Gastrocnemius medialis (tissue), 4 donors: ENCODE measurements at regions of chr9 and their contacts with region 1.

Region 1: DNA sequence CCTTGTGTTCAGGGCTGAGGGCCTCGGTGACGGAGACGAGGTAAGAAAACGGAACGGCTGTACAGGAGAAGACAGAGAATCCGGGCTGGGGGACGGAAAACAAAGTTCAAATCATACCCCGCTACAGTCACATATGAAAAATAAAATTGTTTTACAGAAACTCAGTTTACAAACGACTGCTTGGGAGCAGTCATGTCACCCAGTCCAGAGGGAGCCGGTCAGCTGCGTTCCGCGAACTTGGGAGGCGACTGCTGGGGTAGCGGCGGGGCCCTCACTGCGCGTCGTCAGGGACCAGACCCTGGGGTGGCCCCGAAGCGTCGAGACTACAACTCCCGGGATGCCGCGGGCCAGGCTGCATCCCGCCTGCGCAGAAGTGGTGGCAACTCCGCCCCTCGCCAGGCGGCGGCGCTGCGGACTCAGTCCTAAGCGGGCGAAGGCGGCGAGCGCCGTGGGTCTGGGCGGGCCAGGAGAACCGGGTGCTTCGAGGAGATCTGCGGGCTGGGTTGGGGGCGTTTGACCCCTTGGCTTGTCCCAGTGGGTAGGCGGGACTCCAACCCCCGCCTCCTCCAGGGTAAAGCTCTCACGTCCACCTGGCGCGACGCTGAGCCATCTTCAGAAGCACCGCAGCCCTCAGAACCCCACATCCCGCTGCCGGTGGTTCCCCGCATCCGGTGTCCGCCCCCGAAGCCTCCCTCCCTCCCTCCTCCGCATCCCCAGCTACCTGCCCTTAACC is 4.0 kb downstream of the SIT1 start:
- DNase-seq: peak; percentile 84 to 88
- ATAC-seq: peak; percentile 90 to 94
- H3K4me3 ChIP-seq: peak overlapping the region; percentile 66 to 75 (median 70)
- H3K27ac ChIP-seq: peak overlapping the region; percentile 83 to 91 (median 88)
- H3K4me1 ChIP-seq: peaks cover 11% of the 10 kb centered on the region in 2 donors
- H3K27me3 ChIP-seq: no peaks in the 10 kb centered on the region
- CTCF ChIP-seq: peak; percentile 96 to 99 (median 98)
- POLR2A ChIP-seq: peak; percentile 74 to 81

Region 2: DNA sequence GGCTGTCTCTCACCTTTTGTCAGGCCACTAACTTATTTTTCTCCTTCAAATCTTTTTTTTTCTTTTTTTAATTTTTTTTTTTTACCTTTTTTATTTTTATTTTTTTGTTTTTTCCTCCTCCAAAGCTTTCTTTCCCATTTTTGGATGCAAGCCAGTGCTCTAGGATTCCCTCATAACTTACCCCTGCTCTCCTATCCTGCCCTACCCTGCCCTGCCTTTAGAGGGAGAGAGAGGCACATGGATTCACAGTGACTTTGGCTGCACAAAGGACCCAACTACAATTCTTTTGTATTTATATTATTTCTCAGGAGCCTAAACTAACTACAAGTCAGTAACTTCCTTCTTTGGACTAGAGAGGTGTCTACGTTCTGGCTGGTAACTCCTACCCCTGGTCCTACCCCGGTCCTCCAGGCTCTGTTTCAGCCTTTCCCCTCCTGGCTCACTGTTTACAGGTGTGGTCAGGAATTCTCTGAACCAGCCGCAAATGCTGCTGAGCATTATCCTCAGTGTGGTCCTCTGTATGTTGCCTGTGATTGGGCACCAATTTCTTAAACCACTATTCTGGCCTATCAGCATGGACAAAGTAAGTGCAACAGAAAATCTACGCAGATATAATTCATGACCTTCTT is 165.2 kb before region 1 on chr9:
- in situ Hi-C with region 1: no loop called
- intact Hi-C with region 1: loop called (anchors 5 kb)
- DNase-seq: peak; percentile 27 to 71
- ATAC-seq: peak; percentile 68 to 78
- H3K4me3 ChIP-seq: no peak overlapping the region
- H3K27ac ChIP-seq: no peak overlapping the region
- H3K4me1 ChIP-seq: no peaks in the 10 kb centered on the region
- H3K27me3 ChIP-seq: no peaks in the 10 kb centered on the region
- CTCF ChIP-seq: peak; percentile 74 to 89 (median 78)
- POLR2A ChIP-seq: no peak

Region 3: GRCh38 chr9:35657546-35658136 is 10.9 kb after region 1 on chr9 and contains the start of gene RMRP:
- in situ Hi-C with region 1: no loop called
- intact Hi-C with region 1: loop called (anchors 1 kb)
- DNase-seq: peak; percentile 97 to 98
- ATAC-seq: peak; percentile 91 to 96
- H3K4me3 ChIP-seq: peak within 1 kb of the TSS; percentile 79 to 85 (median 82)
- H3K27ac ChIP-seq: peak within 1 kb of the TSS; percentile 92 to 97 (median 96)
- H3K4me1 ChIP-seq: peaks cover 28 to 29% of the 10 kb centered on the region in 2 donors
- H3K27me3 ChIP-seq: no peaks in the 10 kb centered on the region
- CTCF ChIP-seq: peak; percentile 44 to 56 (median 52)
- POLR2A ChIP-seq: peak; percentile 56 to 61
- total RNA-seq, gene RMRP: 115 to 715 (median 367) TPM

Region 4: GRCh38 chr9:35690431-35691333 is 44.0 kb after region 1 on chr9:
- in situ Hi-C with region 1: loop called in 1 of 4 experiments (anchors 10 kb)
- intact Hi-C with region 1: loop called (anchors 1 kb)
- DNase-seq: peak; percentile 56 to 75
- ATAC-seq: peak; percentile 21 to 32
- H3K4me3 ChIP-seq: peak overlapping the region; percentile 77 to 96 (median 87)
- H3K27ac ChIP-seq: peak overlapping the region; percentile 97 to 99 (median 98)
- H3K4me1 ChIP-seq: peaks cover 35 to 37% of the 10 kb centered on the region in 2 donors
- H3K27me3 ChIP-seq: no peaks in the 10 kb centered on the region
- CTCF ChIP-seq: no peak
- POLR2A ChIP-seq: peak; percentile 21 to 25

Region 5: DNA sequence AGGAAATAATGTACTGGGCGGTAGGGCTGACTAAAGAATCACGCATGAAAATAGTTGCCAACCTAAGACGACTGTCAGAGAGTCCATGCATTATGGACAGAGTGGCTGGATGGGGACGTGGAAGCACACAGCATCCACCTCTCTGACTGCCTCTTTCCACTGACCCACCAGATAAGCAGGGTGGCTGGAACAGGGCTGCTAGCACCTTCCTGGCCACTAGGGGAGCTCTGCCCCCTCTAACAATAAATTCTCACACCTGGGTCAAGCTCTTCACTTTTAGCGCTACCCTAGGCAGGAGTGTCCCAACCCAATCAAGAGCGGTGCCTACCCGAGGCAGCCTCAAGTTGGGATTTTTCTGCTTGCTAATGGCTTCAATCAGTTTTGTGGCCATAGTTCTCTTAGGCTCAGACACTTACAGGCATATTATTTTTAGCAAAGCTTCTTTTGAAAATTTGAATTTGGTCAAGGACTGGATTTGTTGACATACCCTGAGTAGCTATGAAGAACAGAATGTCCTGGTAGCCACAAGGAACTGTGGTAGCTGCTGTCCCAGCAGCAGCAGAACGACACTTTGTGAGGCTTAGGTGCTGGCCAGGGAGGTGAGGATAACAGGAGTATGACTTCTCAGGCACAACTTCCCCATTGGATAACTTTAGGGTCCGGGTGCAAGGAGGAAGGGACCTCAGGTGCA is 50.0 kb after region 1 on chr9:
- in situ Hi-C with region 1: loop called in 1 of 4 experiments (anchors 10 kb)
- intact Hi-C with region 1: loop called (anchors 1 kb)
- DNase-seq: peak in 1 of 2 donors; percentile 62
- ATAC-seq: peak; percentile 77 to 86
- H3K4me3 ChIP-seq: no peak overlapping the region
- H3K27ac ChIP-seq: peak overlapping the region; percentile 37 to 66 (median 58)
- H3K4me1 ChIP-seq: peaks cover 7 to 8% of the 10 kb centered on the region in 2 donors
- H3K27me3 ChIP-seq: no peaks in the 10 kb centered on the region
- CTCF ChIP-seq: peak; percentile 79 to 95 (median 82)
- POLR2A ChIP-seq: no peak

Region 6: DNA sequence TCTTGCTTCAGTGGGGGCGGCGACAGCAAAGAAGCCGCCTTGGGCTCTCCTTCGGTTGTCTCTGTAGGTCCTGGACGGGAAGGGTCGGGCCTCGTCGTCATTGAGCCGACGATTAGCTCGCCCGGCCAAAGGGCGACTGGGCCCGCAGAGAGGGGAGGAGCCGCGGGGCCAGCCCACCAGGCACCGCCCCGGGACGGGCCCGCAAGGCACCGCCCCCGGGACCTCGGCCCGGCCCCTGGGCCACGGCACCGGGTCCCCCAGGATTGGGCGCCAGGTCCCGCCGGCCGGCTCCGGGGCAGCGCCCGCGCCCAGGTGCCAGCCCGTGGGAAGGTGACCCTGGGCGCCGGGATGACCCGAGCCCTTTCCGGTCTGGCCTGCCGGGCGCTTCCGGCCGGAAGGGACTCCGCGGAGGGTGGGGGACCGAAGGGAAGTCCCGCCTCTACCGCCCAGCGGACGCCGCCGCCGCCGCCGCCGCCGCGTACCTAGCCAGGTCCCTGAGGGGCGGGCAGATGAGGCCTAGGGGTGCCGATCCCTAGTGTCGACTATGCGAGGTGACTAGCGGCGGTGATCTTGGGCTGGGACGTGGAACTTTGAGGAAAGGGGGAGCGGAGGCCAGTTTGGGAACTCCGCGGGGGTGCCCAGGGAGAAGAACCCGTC is 102.3 kb after region 1 on chr9 and contains the starts of genes GBA2 and RGP1:
- in situ Hi-C with region 1: no loop called
- intact Hi-C with region 1: loop called (anchors 1 kb)
- DNase-seq: peak; percentile 71 to 87
- ATAC-seq: peak; percentile 81 to 85
- H3K4me3 ChIP-seq: peak within 1 kb of the TSS; percentile 81 to 99 (median 85)
- H3K27ac ChIP-seq: peak within 1 kb of the TSS; percentile 88 to 97 (median 94)
- H3K4me1 ChIP-seq: peaks cover 41 to 45% of the 10 kb centered on the region in 2 donors
- H3K27me3 ChIP-seq: no peaks in the 10 kb centered on the region
- CTCF ChIP-seq: no peak
- POLR2A ChIP-seq: peak; percentile 88 to 95
- total RNA-seq, gene GBA2: 47.3 to 63.2 (median 51.4) TPM
- total RNA-seq, gene RGP1: 22.0 to 41.1 (median 36.3) TPM

Region 7: GRCh38 chr9:35882263-35882848 is 235.7 kb after region 1 on chr9:
- in situ Hi-C with region 1: no loop called
- intact Hi-C with region 1: loop called (anchors 1 kb)
- DNase-seq: peak; percentile 57 to 77
- ATAC-seq: peak; percentile 90 to 92
- H3K4me3 ChIP-seq: no peak overlapping the region
- H3K27ac ChIP-seq: no peak overlapping the region
- H3K4me1 ChIP-seq: no peaks in the 10 kb centered on the region
- H3K27me3 ChIP-seq: no peaks in the 10 kb centered on the region
- CTCF ChIP-seq: peak; percentile 88 to 98 (median 92)
- POLR2A ChIP-seq: no peak